ENCODE measurements at regions of chr11 and their contacts with region 1.

Region 1: GRCh38 chr11:101860696-101861427 is 53.9 kb upstream of the CEP126 start:
- DNase-seq: peak; percentile 5
- H3K4me3 Mint-ChIP-seq: no peak overlapping the region
- H3K27ac Mint-ChIP-seq: no peak overlapping the region
- H3K4me1 Mint-ChIP-seq: no peaks in the 10 kb centered on the region
- H3K27me3 Mint-ChIP-seq: no peaks in the 10 kb centered on the region

Region 2: GRCh38 chr11:101612481-101612880 is 248.4 kb before region 1 on chr11:
- intact Hi-C with region 1: no loop called
- DNase-seq: no peak
- H3K4me3 Mint-ChIP-seq: no peak overlapping the region
- H3K27ac Mint-ChIP-seq: no peak overlapping the region
- H3K4me1 Mint-ChIP-seq: no peaks in the 10 kb centered on the region
- H3K27me3 Mint-ChIP-seq: no peaks in the 10 kb centered on the region

Region 3: DNA sequence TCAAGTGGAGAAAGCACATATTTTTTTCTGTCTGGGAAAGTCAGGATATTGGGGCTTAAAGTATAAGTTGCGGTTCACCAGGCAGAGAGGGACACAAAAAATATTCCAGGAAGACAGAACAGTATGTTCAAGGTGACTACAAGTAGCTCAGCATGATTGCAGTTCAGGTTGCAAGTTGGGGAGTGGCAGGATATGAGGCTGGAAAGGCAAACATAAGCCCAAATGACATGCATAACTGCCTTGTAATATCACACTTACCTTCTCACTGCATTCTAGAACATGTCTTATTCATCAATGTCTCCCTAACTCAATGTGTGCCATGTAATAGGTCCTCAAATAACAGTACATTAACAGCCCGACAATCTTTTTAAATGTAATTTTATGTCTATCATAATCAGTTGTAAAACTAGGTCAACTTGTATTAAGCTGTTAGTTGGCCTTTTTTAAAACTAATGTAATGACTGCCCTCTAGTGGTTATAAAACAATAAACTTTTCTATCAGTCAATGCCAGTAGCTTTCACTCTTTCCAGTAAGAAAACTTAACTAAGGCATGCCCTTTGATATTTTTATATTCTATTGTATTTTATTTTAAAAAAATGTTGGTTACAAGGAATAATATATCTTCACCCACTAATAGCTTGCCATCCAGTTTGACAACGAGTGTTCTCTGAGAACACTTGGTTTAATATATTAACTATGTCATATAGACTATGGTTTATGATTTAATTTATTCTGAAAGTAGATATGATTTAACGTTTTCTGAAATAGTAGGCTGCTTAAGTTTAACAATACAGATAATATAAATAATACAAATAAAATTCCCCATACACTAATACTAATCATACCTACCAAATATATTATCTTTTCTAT is 146.9 kb after region 1 on chr11:
- intact Hi-C with region 1: loop called (anchors 1 kb)
- DNase-seq: no peak
- H3K4me3 Mint-ChIP-seq: no peak overlapping the region
- H3K27ac Mint-ChIP-seq: no peak overlapping the region
- H3K4me1 Mint-ChIP-seq: peaks cover 7% of the 10 kb centered on the region
- H3K27me3 Mint-ChIP-seq: peaks cover 7% of the 10 kb centered on the region